Dendritic cell treated with granulocyte-macrophage colony-stimulating factor and Interleukin-4, amounts not matched to agents 40 ng/mL and 50 ng/mL, for 4 days (primary cell): ENCODE measurements at regions of chr7 and their contacts with region 1.

Region 1: DNA sequence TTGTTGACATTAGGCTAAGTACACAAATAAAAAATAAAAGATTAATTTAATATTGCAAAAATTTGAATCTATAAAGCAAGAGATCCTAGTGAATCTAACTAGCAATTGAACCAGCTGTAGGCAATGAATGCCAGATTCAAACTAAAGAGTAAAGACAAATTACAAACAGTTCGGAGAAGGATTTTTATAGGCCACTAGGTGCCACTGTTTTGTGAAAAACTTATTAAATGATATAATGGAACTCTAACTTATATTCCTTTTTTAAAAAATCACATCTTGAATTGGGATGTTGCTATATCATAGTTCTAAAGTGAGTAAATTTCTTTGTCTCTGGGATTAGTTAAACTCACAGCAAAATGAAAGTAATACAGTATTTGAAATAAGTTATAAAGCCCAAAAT is 39.1 kb upstream of the GNAI1 start:
- H3K4me3 Mint-ChIP-seq: no peak overlapping the region
- H3K27ac Mint-ChIP-seq: no peak overlapping the region
- H3K4me1 Mint-ChIP-seq: no peaks in the 10 kb centered on the region
- H3K27me3 Mint-ChIP-seq: no peaks in the 10 kb centered on the region

Region 2: DNA sequence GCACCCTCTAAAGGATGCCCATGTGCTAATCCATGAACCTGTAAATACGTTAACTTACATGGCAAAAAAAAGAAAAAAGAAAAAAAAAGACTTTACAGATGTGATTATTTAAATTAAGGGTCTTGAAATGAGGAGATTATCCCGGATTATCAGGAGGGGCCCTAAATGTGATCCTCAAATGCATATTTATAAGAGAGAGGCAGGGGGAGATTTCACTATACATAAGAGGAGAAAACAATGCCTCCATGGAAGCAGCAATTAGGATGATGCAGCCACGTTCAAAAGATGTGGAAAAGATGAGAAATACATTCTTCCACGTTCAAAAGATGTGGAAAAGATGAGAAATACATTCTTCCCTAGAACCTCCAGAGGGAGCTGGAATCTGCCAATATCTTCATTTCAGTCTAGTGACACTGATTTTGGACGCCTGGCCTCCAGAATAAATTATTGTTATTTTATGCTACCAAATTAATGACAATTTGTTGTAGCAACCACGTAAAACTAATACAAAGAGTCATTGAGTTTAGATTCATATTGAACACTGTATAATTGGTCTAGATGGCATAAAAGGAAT is 289.3 kb before region 1 on chr7:
- intact Hi-C with region 1: no loop called
- H3K4me3 Mint-ChIP-seq: no peak overlapping the region
- H3K27ac Mint-ChIP-seq: no peak overlapping the region
- H3K4me1 Mint-ChIP-seq: no peaks in the 10 kb centered on the region
- H3K27me3 Mint-ChIP-seq: no peaks in the 10 kb centered on the region

Region 3: GRCh38 chr7:80027611-80028173 is 67.9 kb before region 1 on chr7:
- intact Hi-C with region 1: no loop called
- H3K4me3 Mint-ChIP-seq: no peak overlapping the region
- H3K27ac Mint-ChIP-seq: no peak overlapping the region
- H3K4me1 Mint-ChIP-seq: no peaks in the 10 kb centered on the region
- H3K27me3 Mint-ChIP-seq: no peaks in the 10 kb centered on the region

Region 4: DNA sequence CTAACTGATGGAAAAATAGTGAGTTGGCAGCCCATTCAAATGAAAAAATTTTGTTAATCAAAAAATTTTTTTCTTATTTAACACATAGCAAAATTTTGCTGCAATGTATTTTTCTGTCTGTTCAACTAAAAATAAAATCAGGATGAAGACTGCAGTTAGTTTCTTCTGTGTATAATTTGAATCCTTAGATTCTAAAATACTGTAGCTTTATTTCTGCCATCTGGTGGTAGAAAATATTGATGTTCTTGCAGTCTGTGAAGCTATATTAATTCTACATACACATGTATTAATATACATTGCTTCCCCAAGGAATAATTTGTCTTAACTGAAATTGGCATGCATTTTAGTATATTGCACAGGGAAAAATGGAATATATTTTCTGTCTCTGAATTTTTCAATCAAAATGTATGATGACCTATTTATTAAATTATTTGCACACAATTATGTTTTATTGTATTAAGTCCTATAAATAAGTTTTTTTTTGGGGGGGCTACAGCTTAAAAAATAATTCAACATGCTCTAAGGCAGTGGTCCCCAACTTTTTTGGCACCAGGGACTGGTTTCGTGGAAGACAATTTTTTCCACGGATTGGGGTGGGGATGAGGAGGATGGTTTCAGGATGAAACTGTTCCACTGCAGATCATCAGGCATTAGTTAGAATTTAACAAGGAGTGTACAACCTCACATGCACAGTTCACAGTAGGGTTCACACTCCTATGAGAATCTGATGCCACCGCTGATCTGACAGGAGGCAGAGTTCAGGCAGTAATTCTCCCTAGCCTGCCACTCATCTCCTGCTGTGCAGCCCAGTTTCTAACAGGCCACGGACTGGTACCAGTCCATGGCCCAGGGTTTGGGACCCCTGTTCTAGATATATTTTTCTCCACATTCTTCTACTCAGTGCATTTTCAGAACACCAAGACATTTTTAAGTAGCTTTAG is 297.0 kb after region 1 on chr7:
- intact Hi-C with region 1: loop called (anchors 5 kb)
- H3K4me3 Mint-ChIP-seq: no peak overlapping the region
- H3K27ac Mint-ChIP-seq: no peak overlapping the region
- H3K4me1 Mint-ChIP-seq: no peaks in the 10 kb centered on the region
- H3K27me3 Mint-ChIP-seq: no peaks in the 10 kb centered on the region